ENCODE measurements at regions of chr6 and their contacts with region 1.

Region 1: DNA sequence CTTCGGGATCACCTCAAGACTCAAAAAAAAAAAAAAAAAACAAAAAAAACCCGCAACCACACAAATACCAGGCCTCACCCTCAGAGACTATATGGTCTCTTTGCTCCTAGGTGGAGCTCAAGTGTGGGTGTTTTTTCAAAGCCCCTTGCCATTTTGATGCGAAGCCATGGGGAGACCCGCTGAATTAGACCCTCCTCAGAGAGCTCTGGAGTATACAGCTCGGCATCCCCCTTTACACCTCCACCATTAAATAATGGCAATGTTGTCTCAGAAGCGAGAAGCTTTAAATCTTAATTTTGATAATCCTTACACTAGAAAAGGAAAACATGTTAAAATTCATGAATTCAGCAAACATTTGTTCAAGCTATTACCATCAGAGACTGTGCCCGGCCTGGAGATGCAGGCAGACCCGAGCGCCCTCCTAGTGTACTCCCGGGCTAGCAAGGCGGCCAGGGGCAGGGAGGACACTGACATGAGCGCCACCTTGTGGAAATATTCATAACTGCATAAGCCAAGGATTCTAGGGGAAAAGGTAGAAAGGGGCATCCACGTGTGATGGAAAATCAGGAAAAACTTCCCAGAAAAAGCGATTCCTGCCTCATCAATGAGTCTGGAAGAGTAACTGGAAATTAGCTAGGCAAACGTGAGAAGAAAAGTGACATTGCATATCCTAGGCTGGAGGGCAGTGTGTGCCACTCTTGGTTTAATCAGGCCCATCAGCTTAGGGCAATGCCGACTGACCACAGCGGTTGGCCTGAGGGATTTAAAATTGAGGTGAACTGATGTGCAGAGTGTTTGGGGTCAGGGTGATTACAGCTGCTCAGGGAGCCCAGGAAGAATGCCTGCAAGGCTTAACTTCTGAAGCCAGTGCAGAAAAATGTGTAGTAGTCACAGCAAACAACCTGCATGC is 72.5 kb downstream of the B3GAT2 start:
- DNase-seq: peak; percentile 66
- ATAC-seq: peak; percentile 86
- H3K4me3 ChIP-seq: no peak overlapping the region
- H3K4me3 Mint-ChIP-seq: no peak overlapping the region
- H3K27ac ChIP-seq: no peak overlapping the region
- H3K27ac Mint-ChIP-seq: no peak overlapping the region
- H3K4me1 ChIP-seq: no peaks in the 10 kb centered on the region
- H3K4me1 Mint-ChIP-seq: no peaks in the 10 kb centered on the region
- H3K27me3 ChIP-seq: peaks cover 0 to 9% (median 0%) of the 10 kb centered on the region in 4 experiments
- H3K27me3 Mint-ChIP-seq: peaks cover 7% of the 10 kb centered on the region
- CTCF ChIP-seq: peak; percentile 99

Region 2: GRCh38 chr6:70310063-70310694 is 574.1 kb before region 1 on chr6:
- CTCF ChIA-PET with region 1: interaction called, 16 read pairs
- POLR2A ChIA-PET with region 1: no interaction called
- intact Hi-C with region 1: loop called (anchors 5 kb)
- DNase-seq: peak; percentile 38
- ATAC-seq: no peak
- H3K4me3 ChIP-seq: no peak overlapping the region
- H3K4me3 Mint-ChIP-seq: no peak overlapping the region
- H3K27ac ChIP-seq: no peak overlapping the region
- H3K27ac Mint-ChIP-seq: no peak overlapping the region
- H3K4me1 ChIP-seq: no peaks in the 10 kb centered on the region
- H3K4me1 Mint-ChIP-seq: no peaks in the 10 kb centered on the region
- H3K27me3 ChIP-seq: peaks cover 0 to 3% (median 0%) of the 10 kb centered on the region in 4 experiments
- H3K27me3 Mint-ChIP-seq: peaks cover 36% of the 10 kb centered on the region
- CTCF ChIP-seq: peak; percentile 77

Region 3: DNA sequence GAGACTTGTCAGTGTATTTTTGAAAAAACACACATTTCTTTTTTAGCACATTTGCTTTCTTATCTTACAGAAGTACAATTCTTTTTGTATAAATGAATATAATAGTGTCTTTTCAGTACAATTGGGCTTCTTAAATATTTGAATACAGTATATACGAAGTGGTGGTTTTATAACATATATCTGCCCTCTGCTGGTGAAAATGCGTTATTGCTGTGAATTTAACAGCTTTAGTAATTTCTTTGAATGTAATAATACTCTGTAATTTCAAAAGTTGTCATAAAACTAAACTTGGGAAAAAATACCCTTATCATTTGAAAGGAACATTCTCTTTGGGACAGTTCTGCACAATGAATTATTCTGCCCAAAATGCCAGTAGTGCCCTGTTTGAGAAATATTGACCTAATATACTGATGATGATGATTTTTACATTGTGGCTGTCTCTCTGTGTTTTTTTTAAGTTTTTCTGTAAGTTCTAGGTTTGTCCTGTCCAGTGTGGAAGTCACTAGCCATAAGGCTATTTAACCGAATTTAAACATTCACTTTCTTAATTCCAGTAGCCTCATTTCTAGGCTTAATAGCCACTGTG is 197.7 kb before region 1 on chr6:
- CTCF ChIA-PET with region 1: interaction called, 17 read pairs
- POLR2A ChIA-PET with region 1: no interaction called
- intact Hi-C with region 1: no loop called
- DNase-seq: peak; percentile 56
- ATAC-seq: no peak
- H3K4me3 ChIP-seq: no peak overlapping the region
- H3K4me3 Mint-ChIP-seq: no peak overlapping the region
- H3K27ac ChIP-seq: no peak overlapping the region
- H3K27ac Mint-ChIP-seq: no peak overlapping the region
- H3K4me1 ChIP-seq: no peaks in the 10 kb centered on the region
- H3K4me1 Mint-ChIP-seq: peaks cover 30% of the 10 kb centered on the region
- H3K27me3 ChIP-seq: no peaks in the 10 kb centered on the region
- H3K27me3 Mint-ChIP-seq: no peaks in the 10 kb centered on the region
- CTCF ChIP-seq: peak; percentile 92

Region 4: GRCh38 chr6:70706491-70707123 is 177.7 kb before region 1 on chr6:
- CTCF ChIA-PET with region 1: interaction called, 174 read pairs
- POLR2A ChIA-PET with region 1: no interaction called
- intact Hi-C with region 1: loop called (anchors 1 kb)
- DNase-seq: peak; percentile 62
- ATAC-seq: no peak
- H3K4me3 ChIP-seq: no peak overlapping the region
- H3K4me3 Mint-ChIP-seq: no peak overlapping the region
- H3K27ac ChIP-seq: no peak overlapping the region
- H3K27ac Mint-ChIP-seq: no peak overlapping the region
- H3K4me1 ChIP-seq: no peaks in the 10 kb centered on the region
- H3K4me1 Mint-ChIP-seq: peaks cover 23% of the 10 kb centered on the region
- H3K27me3 ChIP-seq: no peaks in the 10 kb centered on the region
- H3K27me3 Mint-ChIP-seq: no peaks in the 10 kb centered on the region
- CTCF ChIP-seq: peak; percentile 97

Region 5: DNA sequence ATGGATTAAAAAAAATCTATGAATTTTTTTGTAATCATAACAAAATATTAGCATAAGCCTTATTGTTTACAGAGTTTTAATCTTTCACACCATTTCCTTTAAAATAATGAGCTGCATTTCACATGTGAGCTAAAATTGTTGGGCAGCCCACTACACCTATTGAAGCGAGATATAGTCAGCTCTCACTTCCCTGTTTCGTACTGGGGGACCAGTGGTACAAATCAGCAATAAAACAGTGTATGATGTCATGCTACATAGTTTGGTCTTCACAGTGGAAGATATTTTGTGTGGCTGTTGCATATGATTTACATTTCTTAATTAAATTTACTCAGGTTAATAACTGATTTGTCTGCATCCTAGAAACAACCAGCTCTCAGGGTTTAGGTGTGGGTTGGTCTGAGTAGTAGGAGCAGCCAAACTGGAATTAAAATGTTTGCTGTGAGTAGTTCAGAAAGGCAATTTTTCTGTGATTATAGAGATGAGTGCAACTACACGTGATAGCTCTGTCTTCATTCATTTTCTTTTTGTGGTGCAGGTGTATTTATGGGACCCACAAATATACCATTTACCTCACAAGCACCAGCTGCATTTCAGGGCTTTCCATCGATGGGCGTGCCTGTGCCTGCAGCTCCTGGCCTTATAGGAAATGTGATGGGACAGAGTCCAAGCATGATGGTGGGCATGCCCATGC is 26.8 kb before region 1 on chr6:
- CTCF ChIA-PET with region 1: interaction called, 14 read pairs
- POLR2A ChIA-PET with region 1: no interaction called
- intact Hi-C with region 1: no loop called
- DNase-seq: peak; percentile 59
- ATAC-seq: peak; percentile 98
- H3K4me3 ChIP-seq: no peak overlapping the region
- H3K4me3 Mint-ChIP-seq: no peak overlapping the region
- H3K27ac ChIP-seq: no peak overlapping the region
- H3K27ac Mint-ChIP-seq: no peak overlapping the region
- H3K4me1 ChIP-seq: peaks cover 10 to 17% of the 10 kb centered on the region in 2 donors
- H3K4me1 Mint-ChIP-seq: peaks cover 21% of the 10 kb centered on the region
- H3K27me3 ChIP-seq: no peaks in the 10 kb centered on the region
- H3K27me3 Mint-ChIP-seq: no peaks in the 10 kb centered on the region
- CTCF ChIP-seq: no peak

Region 6: GRCh38 chr6:71012866-71013469 is 128.6 kb after region 1 on chr6:
- CTCF ChIA-PET with region 1: no interaction called
- POLR2A ChIA-PET with region 1: no interaction called
- intact Hi-C with region 1: loop called (anchors 10 kb)
- DNase-seq: peak; percentile 64
- ATAC-seq: no peak
- H3K4me3 ChIP-seq: no peak overlapping the region
- H3K4me3 Mint-ChIP-seq: no peak overlapping the region
- H3K27ac ChIP-seq: no peak overlapping the region
- H3K27ac Mint-ChIP-seq: no peak overlapping the region
- H3K4me1 ChIP-seq: peaks cover 0 to 3% of the 10 kb centered on the region in 2 donors
- H3K4me1 Mint-ChIP-seq: peaks cover 2% of the 10 kb centered on the region
- H3K27me3 ChIP-seq: peaks cover 0 to 13% (median 0%) of the 10 kb centered on the region in 4 experiments
- H3K27me3 Mint-ChIP-seq: peaks cover 14% of the 10 kb centered on the region
- CTCF ChIP-seq: peak; percentile 84

Measured in B cell (primary cell).